Posterior vena cava (tissue), 2 donors: ENCODE measurements at regions of chr9 and their contacts with region 1.

Region 1: DNA sequence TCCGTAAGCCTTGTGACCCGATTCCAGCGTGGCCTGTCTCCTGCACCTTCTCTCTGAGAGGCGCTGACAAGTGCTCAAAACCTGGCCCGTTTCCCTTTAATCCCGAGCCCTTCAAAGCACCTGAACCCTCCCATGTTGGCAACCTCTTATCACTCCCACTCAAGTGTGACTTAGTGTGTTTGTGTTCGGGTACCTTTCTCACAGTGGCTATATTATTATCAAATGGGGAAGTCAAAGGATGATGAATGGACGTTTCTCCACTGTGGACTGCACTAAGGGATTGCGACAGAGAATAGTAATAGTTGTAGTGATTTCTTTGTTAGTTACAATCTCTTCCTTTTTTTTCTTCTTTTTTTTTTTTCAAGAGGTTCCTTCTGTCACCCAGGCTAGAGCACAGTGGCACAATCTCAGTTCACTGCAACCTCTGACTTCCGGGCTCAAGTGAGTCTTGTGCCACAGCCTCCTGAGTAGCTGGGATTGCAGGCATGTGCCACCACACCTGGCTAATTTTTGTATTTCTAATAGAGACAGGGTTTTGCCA is 65.4 kb upstream of the TNFSF8 start:
- DNase-seq: no peak

Region 2: DNA sequence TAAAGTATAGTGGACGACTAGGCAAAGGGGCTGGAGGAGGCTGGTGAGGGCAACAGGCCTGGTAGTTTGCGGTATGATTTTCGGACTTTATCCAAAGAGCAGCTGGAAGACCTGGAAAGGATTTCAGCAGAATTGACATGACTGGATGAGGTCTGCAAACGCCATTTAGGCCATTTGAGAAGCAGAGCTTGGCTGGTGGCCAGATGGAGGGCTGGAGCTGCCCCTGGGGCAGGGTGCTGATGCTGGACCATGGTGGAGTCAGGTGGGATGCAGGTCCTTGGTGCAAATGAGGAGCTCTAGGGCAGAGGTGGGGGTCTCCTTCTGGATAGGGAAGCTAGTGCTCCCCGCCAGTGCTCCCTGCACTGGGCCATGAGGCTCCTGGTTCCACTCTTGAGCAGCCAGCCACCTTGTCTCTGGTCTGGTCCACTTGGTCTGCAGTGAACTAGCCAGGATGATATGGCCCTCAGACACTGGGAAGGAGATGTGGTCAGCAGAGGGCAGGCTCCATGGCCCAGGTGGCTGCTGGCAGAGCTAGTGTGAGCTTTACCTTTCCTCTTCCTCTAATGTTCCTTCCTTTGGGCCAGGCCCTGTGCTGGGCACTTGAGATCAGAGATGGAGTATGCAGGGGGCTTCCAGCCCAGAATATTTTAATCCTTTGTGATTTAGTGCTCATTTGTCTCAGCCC is 809.0 kb before region 1 on chr9:
- intact Hi-C with region 1: loop called in 1 of 2 experiments (anchors 5 kb)
- DNase-seq: no peak